ENCODE measurements at regions of chr7 and their contacts with region 1.

Region 1: GRCh38 chr7:128103498-128104034 is 72.3 kb upstream of the LRRC4 start:
- DNase-seq: peak in 4 of 14 experiments; percentile 19 to 31 (median 24)
- ATAC-seq: peak; percentile 45
- H3K4me3 ChIP-seq: peak overlapping the region; percentile 56
- H3K4me3 Mint-ChIP-seq: peak overlapping the region; percentile 87
- H3K27ac ChIP-seq: no peak overlapping the region
- H3K27ac Mint-ChIP-seq: peak overlapping the region; percentile 69
- H3K4me1 ChIP-seq: peaks cover 51% of the 10 kb centered on the region
- H3K4me1 Mint-ChIP-seq: peaks cover 69% of the 10 kb centered on the region
- H3K27me3 ChIP-seq: no peaks in the 10 kb centered on the region
- H3K27me3 Mint-ChIP-seq: no peaks in the 10 kb centered on the region
- CTCF ChIP-seq: no peak

Region 2: DNA sequence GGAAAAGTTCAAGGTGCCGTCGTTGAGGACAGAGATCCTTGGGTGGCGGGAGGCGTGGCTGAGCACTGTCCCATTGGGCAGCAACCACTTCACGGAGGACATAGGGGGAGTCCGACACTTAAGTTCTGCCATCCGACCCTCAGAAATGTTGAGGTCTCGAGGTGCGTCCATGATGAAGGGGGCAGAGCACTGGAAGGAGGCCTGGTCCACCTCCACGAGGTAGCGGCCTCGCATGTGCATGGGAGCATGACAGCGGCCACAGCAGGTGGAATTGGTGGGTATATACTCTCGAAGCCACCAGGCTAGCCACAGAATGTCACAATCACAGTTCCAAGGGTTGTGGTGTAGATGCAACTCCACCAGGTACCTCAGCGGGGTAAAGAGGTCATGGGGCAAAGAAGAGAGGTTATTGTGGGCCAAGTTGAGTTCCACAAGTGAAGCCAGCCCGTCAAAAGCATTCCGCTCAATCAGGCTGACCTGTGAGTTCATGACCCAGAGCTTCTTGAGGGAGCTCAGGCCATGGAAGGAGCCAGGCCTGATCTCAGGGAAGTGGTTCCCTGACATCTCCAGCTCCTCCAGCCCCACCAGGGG is 74.1 kb before region 1 on chr7:
- CTCF ChIA-PET with region 1: no interaction called
- POLR2A ChIA-PET with region 1: no interaction called
- intact Hi-C with region 1: no loop called
- DNase-seq: no peak
- ATAC-seq: no peak
- H3K4me3 ChIP-seq: no peak overlapping the region
- H3K4me3 Mint-ChIP-seq: peak overlapping the region; percentile 76
- H3K27ac ChIP-seq: no peak overlapping the region
- H3K27ac Mint-ChIP-seq: no peak overlapping the region
- H3K4me1 ChIP-seq: peaks cover 23% of the 10 kb centered on the region
- H3K4me1 Mint-ChIP-seq: peaks cover 42% of the 10 kb centered on the region
- H3K27me3 ChIP-seq: peaks cover 0 to 10% of the 10 kb centered on the region in 2 experiments
- H3K27me3 Mint-ChIP-seq: no peaks in the 10 kb centered on the region
- CTCF ChIP-seq: no peak

Region 3: DNA sequence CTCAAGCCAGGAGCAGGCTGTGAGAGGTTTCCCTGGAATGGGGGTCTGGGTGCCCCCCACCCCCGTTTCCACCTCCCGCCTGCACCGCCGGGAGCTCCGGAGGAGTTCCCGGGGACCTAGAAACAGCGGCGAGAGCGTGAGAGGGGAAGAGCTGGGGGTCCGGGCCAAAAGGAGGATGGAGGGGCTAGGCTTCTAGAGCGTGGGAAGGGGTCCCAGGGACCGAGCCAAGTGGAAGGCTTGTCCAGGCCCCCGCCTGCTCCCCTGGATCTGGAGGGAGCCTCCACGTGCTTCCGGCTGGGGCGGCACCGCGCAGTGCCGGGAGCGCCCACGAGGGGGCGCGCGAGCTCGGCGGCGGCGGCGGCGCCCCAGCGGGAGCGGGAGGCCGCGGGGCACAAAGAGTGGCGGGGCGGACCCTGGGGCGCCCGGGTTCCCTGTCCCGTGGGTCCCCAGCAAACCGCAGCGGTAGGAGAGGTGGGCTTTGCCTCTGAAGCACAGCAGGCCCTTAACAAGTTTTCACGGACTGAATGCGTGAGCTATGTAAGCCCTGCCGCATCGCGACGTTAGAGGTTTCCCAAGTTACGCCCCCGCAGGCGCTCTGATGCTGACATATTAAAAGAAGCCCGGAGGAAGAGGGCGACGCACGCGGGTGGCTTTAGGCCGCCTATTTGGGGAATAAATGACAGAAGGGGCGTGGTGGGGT is 32.1 kb after region 1 on chr7:
- CTCF ChIA-PET with region 1: interaction called, 7 read pairs
- POLR2A ChIA-PET with region 1: interaction called, 31 read pairs
- intact Hi-C with region 1: no loop called
- DNase-seq: peak; percentile 26 to 79 (median 50)
- ATAC-seq: peak; percentile 93
- H3K4me3 ChIP-seq: peak overlapping the region; percentile 64
- H3K4me3 Mint-ChIP-seq: peak overlapping the region; percentile 83
- H3K27ac ChIP-seq: no peak overlapping the region
- H3K27ac Mint-ChIP-seq: no peak overlapping the region
- H3K4me1 ChIP-seq: peaks cover 22% of the 10 kb centered on the region
- H3K4me1 Mint-ChIP-seq: peaks cover 18% of the 10 kb centered on the region
- H3K27me3 ChIP-seq: peaks cover 17 to 21% of the 10 kb centered on the region in 2 experiments
- H3K27me3 Mint-ChIP-seq: peaks cover 32% of the 10 kb centered on the region
- CTCF ChIP-seq: peak; percentile 56

Region 4: GRCh38 chr7:128302139-128302538 is 198.6 kb after region 1 on chr7:
- CTCF ChIA-PET with region 1: no interaction called
- POLR2A ChIA-PET with region 1: no interaction called
- intact Hi-C with region 1: no loop called
- DNase-seq: no peak
- ATAC-seq: no peak
- H3K4me3 ChIP-seq: no peak overlapping the region
- H3K4me3 Mint-ChIP-seq: no peak overlapping the region
- H3K27ac ChIP-seq: no peak overlapping the region
- H3K27ac Mint-ChIP-seq: no peak overlapping the region
- H3K4me1 ChIP-seq: no peaks in the 10 kb centered on the region
- H3K4me1 Mint-ChIP-seq: no peaks in the 10 kb centered on the region
- H3K27me3 ChIP-seq: no peaks in the 10 kb centered on the region
- H3K27me3 Mint-ChIP-seq: no peaks in the 10 kb centered on the region
- CTCF ChIP-seq: no peak

Measured in CD4-positive, alpha-beta T cell (primary cell).